PC-9 (cell line): ENCODE measurements at regions of chr10 and their contacts with region 1.

Region 1: GRCh38 chr10:28503114-28503513 is 29.8 kb upstream of the WAC start:
- DNase-seq: peak in 1 of 2 experiments; percentile 53
- H3K4me3 ChIP-seq: peak overlapping the region; percentile 46; the same call in 1 of the 2 replicates
- H3K27ac ChIP-seq: no peak overlapping the region
- H3K4me1 ChIP-seq: peaks cover 11% of the 10 kb centered on the region
- H3K27me3 ChIP-seq: no peaks in the 10 kb centered on the region
- CTCF ChIP-seq: no peak

Region 2: GRCh38 chr10:28403090-28403489 is 100.0 kb before region 1 on chr10:
- CTCF ChIA-PET with region 1: interaction called, 13 read pairs
- POLR2A ChIA-PET with region 1: no interaction called
- intact Hi-C with region 1: no loop called
- DNase-seq: no peak
- H3K4me3 ChIP-seq: no peak overlapping the region
- H3K27ac ChIP-seq: no peak overlapping the region
- H3K4me1 ChIP-seq: no peaks in the 10 kb centered on the region
- H3K27me3 ChIP-seq: peaks cover 12% of the 10 kb centered on the region; the same call in 1 of the 2 replicates
- CTCF ChIP-seq: no peak

Region 3: GRCh38 chr10:28444031-28444430 is 59.1 kb before region 1 on chr10:
- CTCF ChIA-PET with region 1: no interaction called
- POLR2A ChIA-PET with region 1: interaction called, 12 read pairs
- intact Hi-C with region 1: no loop called
- DNase-seq: peak in 1 of 2 experiments; percentile 51
- H3K4me3 ChIP-seq: no peak overlapping the region
- H3K27ac ChIP-seq: no peak overlapping the region
- H3K4me1 ChIP-seq: no peaks in the 10 kb centered on the region
- H3K27me3 ChIP-seq: 0 out of 2 replicates have a peak, but pooled peaks cover 5% of the 10 kb centered on the region
- CTCF ChIP-seq: no peak